ENCODE measurements at regions of chr1 and their contacts with region 1.

Region 1: GRCh38 chr1:152347116-152347728 is 12.6 kb downstream of the FLG2 start:
- DNase-seq: peak; percentile 72
- H3K4me3 Mint-ChIP-seq: no peak overlapping the region
- H3K27ac Mint-ChIP-seq: no peak overlapping the region
- H3K4me1 Mint-ChIP-seq: peaks cover 7% of the 10 kb centered on the region
- H3K27me3 Mint-ChIP-seq: peaks cover 21% of the 10 kb centered on the region

Region 2: DNA sequence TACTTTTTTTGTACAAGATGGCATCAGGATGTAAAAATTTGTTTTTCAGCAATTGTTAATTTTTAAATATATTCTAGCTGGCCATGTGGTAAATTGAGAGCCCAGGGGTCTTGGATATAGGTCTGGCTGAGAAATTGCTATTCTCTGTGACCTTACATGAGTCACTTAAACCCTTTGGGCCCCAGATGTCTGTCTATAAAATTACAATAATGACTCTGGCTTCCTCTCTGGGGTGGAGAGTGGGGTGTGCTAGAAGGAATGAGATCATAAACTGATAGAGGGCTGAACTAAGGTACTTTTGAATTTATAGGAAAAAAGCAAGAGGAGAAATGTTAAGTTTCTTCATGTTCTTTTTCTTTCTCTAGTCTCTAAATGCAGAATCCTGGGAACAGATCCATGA is 219.6 kb before region 1 on chr1:
- CTCF ChIA-PET with region 1: no interaction called
- intact Hi-C with region 1: no loop called
- DNase-seq: no peak
- H3K4me3 Mint-ChIP-seq: no peak overlapping the region
- H3K27ac Mint-ChIP-seq: no peak overlapping the region
- H3K4me1 Mint-ChIP-seq: no peaks in the 10 kb centered on the region
- H3K27me3 Mint-ChIP-seq: peaks cover 54% of the 10 kb centered on the region

Region 3: GRCh38 chr1:152313319-152313801 is 33.9 kb before region 1 on chr1:
- CTCF ChIA-PET with region 1: no interaction called
- intact Hi-C with region 1: no loop called
- DNase-seq: no peak
- H3K4me3 Mint-ChIP-seq: no peak overlapping the region
- H3K27ac Mint-ChIP-seq: no peak overlapping the region
- H3K4me1 Mint-ChIP-seq: no peaks in the 10 kb centered on the region
- H3K27me3 Mint-ChIP-seq: peaks cover 10% of the 10 kb centered on the region

Region 4: DNA sequence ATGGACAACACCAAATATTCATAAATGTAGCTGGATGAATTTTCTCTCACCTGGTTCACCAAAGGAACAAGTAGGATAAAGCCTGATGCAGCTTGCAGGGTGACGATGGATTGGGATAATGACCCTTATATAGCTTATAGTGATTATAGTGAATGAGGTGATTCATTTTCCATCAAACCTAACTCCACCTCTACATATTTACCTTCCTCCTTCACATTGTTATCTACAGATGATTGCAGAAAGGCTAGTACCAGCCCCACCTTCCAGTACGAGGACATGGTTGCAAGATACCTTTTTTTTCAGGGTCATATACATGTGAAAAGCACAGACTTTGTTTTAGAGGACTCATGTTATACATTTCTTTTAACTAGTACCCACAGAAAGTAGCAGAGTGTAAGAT is 12.7 kb after region 1 on chr1 and contains the start of gene FLG2:
- CTCF ChIA-PET with region 1: interaction called, 14 read pairs
- intact Hi-C with region 1: no loop called
- DNase-seq: no peak
- H3K4me3 Mint-ChIP-seq: no peak within 1 kb of the TSS
- H3K27ac Mint-ChIP-seq: no peak within 1 kb of the TSS
- H3K4me1 Mint-ChIP-seq: no peaks in the 10 kb centered on the region
- H3K27me3 Mint-ChIP-seq: peaks cover 14% of the 10 kb centered on the region
- total RNA-seq, gene FLG2: not detected

Region 5: DNA sequence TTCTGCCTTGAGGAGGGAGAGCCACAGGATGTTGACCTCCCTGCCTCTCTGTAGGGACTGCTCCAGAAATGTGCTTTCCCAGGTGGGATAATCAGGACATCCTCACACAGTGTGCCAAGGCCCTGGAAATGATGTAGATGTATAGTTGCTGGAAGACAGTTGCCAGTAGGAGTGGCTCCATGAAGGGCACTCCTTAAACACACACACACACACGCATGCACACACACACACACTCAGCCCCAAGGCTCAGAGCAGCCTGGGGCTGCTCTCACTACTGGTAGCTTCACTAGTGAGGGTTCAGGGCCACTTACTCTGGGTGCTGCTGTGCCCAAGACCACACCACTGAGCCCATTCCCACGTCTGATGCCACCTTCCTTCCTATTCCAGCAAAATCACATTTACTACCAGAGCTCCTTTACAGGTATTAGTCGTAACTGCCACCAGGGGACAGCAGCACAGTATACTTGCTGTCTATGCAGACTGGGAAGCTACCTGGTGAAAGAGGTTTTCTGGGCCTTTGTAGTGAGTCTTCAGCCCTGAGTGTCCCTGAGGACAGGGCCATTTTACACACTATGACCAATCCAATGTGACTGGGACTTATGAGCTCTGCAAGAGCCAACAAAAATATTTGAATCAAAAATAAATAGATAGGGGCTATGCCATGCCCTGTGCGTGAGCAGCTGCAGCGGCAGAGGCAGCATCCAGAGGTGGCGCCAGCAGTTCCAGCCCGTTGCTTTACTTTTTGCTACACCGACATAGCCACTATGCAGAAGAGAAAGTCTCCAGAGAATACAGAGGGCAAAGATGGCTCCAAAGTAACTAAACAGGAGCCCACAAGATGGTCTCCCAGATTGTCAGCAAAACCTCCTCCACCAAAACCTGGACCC is 51.8 kb after region 1 on chr1:
- CTCF ChIA-PET with region 1: no interaction called
- intact Hi-C with region 1: no loop called
- DNase-seq: peak; percentile 22
- H3K4me3 Mint-ChIP-seq: no peak overlapping the region
- H3K27ac Mint-ChIP-seq: no peak overlapping the region
- H3K4me1 Mint-ChIP-seq: no peaks in the 10 kb centered on the region
- H3K27me3 Mint-ChIP-seq: peaks cover 14% of the 10 kb centered on the region

Region 6: DNA sequence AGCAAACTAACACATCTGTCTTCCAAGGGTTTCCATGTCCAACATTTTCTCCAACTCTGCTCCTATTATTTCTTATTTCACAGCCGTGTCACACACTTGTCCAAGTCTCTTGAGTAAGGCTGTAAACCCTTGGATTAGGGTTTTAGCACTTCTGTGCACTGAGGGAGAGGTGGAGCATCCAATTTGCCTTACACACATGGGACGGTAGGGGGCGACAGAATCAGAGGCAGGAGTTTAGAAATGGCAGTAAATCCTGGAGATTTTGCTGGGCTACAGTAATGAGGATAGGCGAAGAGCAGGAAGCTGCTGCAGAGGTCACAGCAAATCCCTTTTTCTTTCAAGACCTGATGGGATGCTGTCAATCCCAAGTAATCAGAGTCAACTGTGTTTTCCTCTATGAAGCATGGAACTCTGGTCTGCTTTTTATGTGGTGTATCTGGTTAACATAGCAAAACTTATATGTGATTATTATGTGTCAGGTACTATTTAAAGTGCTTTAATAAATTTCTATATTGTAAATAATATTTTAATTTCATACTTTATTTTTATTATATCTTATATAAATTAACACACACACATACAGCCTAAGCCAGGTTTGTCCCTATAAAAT is 147.9 kb after region 1 on chr1:
- CTCF ChIA-PET with region 1: no interaction called
- intact Hi-C with region 1: no loop called
- DNase-seq: peak; percentile 44
- H3K4me3 Mint-ChIP-seq: no peak overlapping the region
- H3K27ac Mint-ChIP-seq: no peak overlapping the region
- H3K4me1 Mint-ChIP-seq: no peaks in the 10 kb centered on the region
- H3K27me3 Mint-ChIP-seq: peaks cover 9% of the 10 kb centered on the region